AG04449 (cell line): ENCODE measurements at regions of chr5 and their contacts with region 1.

Region 1: GRCh38 chr5:153964880-153965645 is 73.6 kb downstream of the FAM114A2 start:
- DNase-seq: no peak
- H3K4me3 ChIP-seq: peak overlapping the region; percentile 29; the same call in 1 of the 2 replicates
- CTCF ChIP-seq: peak; percentile 90

Region 2: GRCh38 chr5:152542741-152543140 is 1422.3 kb before region 1 on chr5:
- CTCF ChIA-PET with region 1: interaction called, 10 read pairs
- POLR2A ChIA-PET with region 1: no interaction called
- DNase-seq: no peak
- H3K4me3 ChIP-seq: no peak overlapping the region
- CTCF ChIP-seq: no peak

Region 3: GRCh38 chr5:153496835-153497234 is 468.2 kb before region 1 on chr5:
- CTCF ChIA-PET with region 1: interaction called, 78 read pairs
- POLR2A ChIA-PET with region 1: interaction called, 3 read pairs
- DNase-seq: no peak
- H3K4me3 ChIP-seq: no peak overlapping the region
- CTCF ChIP-seq: peak; percentile 64

Region 4: DNA sequence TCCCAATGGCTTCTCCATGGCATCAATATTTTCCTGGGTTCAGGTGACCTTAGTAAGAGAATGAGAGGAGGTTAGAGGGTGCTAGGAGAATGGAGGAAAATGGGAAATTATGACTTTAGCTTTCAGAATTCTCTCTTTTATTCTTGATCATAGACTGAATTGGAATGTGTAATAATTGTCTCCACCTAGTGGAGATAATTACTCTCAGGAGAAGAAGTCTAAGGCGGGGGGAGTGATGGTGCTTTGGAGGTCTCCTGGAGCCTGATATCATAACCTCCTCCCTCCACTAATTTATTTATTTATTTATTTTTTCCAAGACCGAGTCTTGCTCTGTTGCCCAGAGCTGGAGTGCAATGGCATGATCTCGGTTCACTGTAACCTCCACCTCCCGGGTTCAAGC is 253.3 kb before region 1 on chr5:
- CTCF ChIA-PET with region 1: interaction called, 10 read pairs
- POLR2A ChIA-PET with region 1: no interaction called
- DNase-seq: no peak
- H3K4me3 ChIP-seq: no peak overlapping the region
- CTCF ChIP-seq: no peak

Region 5: DNA sequence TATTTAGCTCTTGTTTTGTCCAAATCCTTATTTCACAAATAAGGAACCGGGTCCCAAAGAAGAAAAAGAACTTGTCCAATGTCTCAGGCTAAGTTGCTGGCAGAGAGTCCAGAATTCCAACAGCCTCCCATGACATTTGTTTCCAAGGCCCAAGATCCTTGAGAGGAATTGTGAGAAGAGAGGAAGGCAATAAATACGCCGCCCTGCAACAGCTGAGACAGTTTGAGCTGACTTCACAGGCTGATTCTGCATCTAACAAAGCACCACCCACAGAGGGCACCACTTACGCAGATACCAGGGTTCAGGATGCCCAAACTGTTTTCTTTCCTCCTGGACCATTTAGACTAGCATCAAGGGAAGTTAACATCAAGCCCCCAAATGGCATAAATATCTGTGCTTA is 137.7 kb before region 1 on chr5:
- CTCF ChIA-PET with region 1: interaction called, 19 read pairs
- POLR2A ChIA-PET with region 1: no interaction called
- DNase-seq: no peak
- H3K4me3 ChIP-seq: no peak overlapping the region
- CTCF ChIP-seq: peak; percentile 26

Region 6: GRCh38 chr5:154049636-154050035 is 84.6 kb after region 1 on chr5:
- CTCF ChIA-PET with region 1: no interaction called
- POLR2A ChIA-PET with region 1: no interaction called
- DNase-seq: no peak
- H3K4me3 ChIP-seq: no peak overlapping the region
- CTCF ChIP-seq: no peak